H1 (cell line): ENCODE measurements at regions of chr12 and their contacts with region 1.

Region 1: DNA sequence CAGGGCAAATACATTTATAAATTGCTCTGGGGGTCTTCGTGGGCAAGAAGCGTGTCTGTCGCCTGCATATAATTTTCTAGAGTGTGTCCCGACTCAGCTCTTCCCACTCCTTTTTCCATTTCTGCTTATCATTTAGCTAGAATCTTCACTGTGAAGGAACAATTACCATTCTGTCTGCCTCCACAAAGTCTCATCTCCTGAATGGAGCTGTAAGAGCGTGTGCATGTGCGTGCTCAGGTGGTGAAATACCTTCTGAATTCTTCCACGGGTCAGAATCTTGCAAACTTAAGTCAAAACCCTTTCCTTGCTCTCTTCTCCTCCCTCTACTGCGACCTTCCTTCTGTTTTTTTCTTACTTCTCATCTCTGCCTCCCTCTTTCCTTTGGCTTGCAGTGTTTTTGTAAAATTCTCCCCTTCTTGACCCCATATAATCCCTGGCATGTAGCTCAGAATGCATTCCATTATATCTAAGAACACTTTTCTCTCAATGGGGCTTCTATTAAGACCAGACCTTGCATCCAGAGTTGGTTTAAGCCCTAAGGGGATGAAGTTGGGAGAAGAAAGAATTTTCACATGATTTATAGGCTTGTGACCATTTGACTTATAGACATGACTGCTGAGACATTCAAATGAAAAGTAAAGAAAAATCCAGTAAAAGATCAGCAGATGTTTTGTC is 25.0 kb upstream of the GSG1 start:
- DNase-seq: no peak
- H3K4me3 ChIP-seq: no peak overlapping the region
- H3K27ac ChIP-seq: no peak overlapping the region
- H3K4me1 ChIP-seq: peaks cover 1 to 7% (median 4%) of the 10 kb centered on the region in 4 experiments; a peak in 3 of 7 replicates
- H3K27me3 ChIP-seq: no peaks in the 10 kb centered on the region
- CTCF ChIP-seq: no peak
- EP300 ChIP-seq: no peak
- POLR2A ChIP-seq: no peak
- RAD21 ChIP-seq: no peak

Region 2: GRCh38 chr12:13103391-13104033 is 24.9 kb before region 1 on chr12 and contains the start of gene GSG1:
- CTCF ChIA-PET with region 1: no interaction called
- POLR2A ChIA-PET with region 1: no interaction called
- DNase-seq: no peak
- H3K4me3 ChIP-seq: no peak within 1 kb of the TSS
- H3K27ac ChIP-seq: no peak within 1 kb of the TSS
- H3K4me1 ChIP-seq: peaks cover 5 to 18% (median 11%) of the 10 kb centered on the region in 4 experiments; a peak in 6 of 7 replicates
- H3K27me3 ChIP-seq: no peaks in the 10 kb centered on the region
- CTCF ChIP-seq: no peak
- EP300 ChIP-seq: no peak
- POLR2A ChIP-seq: no peak
- RAD21 ChIP-seq: no peak
- total RNA-seq, gene GSG1: 0.89 and 1.3 TPM in 2 replicates

Region 3: GRCh38 chr12:13114251-13115052 is 14.0 kb before region 1 on chr12:
- CTCF ChIA-PET with region 1: interaction called, 11 read pairs
- POLR2A ChIA-PET with region 1: interaction called, 5 read pairs
- DNase-seq: no peak
- H3K4me3 ChIP-seq: no peak overlapping the region
- H3K27ac ChIP-seq: no peak overlapping the region
- H3K4me1 ChIP-seq: peaks cover 0 to 13% (median 7%) of the 10 kb centered on the region in 4 experiments; a peak in 6 of 7 replicates
- H3K27me3 ChIP-seq: peaks cover 0 to 3% (median 0%) of the 10 kb centered on the region in 4 experiments; a peak in 1 of 7 replicates
- CTCF ChIP-seq: no peak
- EP300 ChIP-seq: no peak
- POLR2A ChIP-seq: no peak
- RAD21 ChIP-seq: no peak